ENCODE measurements at regions of chr7 and their contacts with region 1.

Region 1: GRCh38 chr7:25125137-25125946 is at the start of gene CYCS:
- H3K4me3 ChIP-seq: peak within 1 kb of the TSS; percentile 90
- H3K27ac ChIP-seq: peak within 1 kb of the TSS; percentile 72
- H3K4me1 ChIP-seq: no peaks in the 10 kb centered on the region
- CTCF ChIP-seq: 0 out of 2 replicates have a peak, but pooled peaks have one; percentile 9

Region 2: DNA sequence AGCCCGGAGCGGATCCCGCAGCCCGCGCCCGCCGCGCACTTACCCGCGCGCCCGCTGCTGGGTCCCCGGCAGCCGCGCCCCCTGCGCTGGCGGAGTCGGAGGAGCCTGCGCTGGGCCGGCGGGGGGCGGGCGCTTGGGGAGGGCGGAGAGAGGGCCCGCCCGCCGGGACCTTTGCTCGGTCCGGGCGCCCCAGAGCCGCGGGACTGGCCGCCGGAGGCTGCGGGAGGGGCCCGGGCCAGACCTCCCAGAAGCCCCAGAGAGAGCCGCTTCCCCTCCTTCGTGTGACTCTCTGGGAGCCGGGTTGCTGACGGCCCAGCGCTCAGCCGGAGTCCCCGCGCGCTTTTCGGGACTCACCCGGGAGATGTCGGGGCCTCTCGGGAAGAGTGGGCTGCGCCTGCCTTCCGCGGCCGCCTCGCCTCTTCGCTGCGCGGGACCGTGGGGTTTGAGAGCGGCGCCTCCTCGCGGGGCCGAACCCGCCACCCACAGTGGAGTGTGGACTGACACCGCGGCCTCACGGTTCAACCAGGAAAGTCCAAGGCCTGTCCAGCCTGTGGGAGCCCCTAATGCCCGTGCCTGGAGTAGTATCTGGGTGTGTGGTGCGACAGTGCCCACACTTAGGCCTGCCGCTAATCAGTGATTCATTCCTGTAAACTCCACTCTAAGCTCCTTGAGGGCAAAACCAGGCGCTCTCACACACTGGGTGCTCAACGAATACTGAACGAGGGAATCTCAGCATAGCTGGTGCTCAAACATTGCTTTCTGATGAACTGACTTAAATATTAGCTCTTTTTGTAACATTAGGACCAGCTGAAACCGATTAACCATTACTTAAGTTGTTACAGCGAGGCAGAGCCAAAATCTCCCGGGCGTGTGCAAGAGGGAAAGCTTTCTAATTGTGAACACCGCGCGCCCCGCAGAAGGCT is 367.7 kb before region 1 on chr7 and contains the start of gene GSDME:
- CTCF ChIA-PET with region 1: no interaction called
- POLR2A ChIA-PET with region 1: interaction called, 11 read pairs
- H3K4me3 ChIP-seq: peak within 1 kb of the TSS; percentile 62
- H3K27ac ChIP-seq: peak within 1 kb of the TSS; percentile 50; the same call in 1 of the 2 replicates
- H3K4me1 ChIP-seq: no peaks in the 10 kb centered on the region
- CTCF ChIP-seq: no peak

Region 3: DNA sequence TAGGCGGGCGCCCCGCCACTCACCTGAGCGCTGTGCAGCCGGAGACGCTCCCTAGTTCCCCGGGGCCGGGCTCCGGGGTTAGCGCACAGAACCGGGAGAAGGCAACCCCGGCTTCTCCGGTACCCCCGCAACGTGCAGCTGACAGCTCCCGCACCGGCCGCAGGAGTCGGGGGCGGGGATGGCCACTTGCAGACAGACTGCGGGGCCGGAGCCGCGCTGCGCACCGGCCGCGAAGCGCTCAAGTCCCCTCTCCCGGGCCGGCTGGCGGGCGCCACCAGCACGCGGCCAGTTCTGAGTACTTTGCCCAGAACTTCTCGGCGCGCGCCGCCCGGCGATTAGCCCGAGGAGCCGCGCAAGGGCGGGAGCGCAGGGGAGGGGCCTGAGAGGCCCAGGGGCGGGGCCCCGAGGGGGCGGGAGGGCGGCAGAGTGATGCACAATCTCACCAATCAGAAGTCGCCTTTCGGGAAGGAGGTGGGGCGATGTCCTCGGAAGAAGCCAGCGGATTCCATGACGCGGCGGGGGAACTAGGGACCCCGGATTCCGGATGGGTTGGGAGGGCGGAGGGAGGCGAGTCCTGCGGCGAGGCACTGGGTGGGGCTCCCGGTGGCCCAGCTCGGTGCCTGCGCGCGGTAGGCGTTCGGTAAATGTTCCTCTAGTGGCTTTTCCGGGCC is 145.3 kb before region 1 on chr7 and contains the start of gene OSBPL3:
- CTCF ChIA-PET with region 1: no interaction called
- POLR2A ChIA-PET with region 1: interaction called, 11 read pairs
- H3K4me3 ChIP-seq: peak within 1 kb of the TSS; percentile 81
- H3K27ac ChIP-seq: peak within 1 kb of the TSS; percentile 87
- H3K4me1 ChIP-seq: peaks cover 2% of the 10 kb centered on the region; the same call in 1 of the 2 replicates
- CTCF ChIP-seq: no peak

Region 4: GRCh38 chr7:25139536-25139935 is 14.2 kb after region 1 on chr7:
- CTCF ChIA-PET with region 1: interaction called, 3 read pairs
- POLR2A ChIA-PET with region 1: interaction called, 12 read pairs
- H3K4me3 ChIP-seq: no peak overlapping the region
- H3K27ac ChIP-seq: no peak overlapping the region
- H3K4me1 ChIP-seq: no peaks in the 10 kb centered on the region
- CTCF ChIP-seq: no peak

Region 5: GRCh38 chr7:25179771-25180591 is 54.6 kb after region 1 on chr7:
- CTCF ChIA-PET with region 1: interaction called, 4 read pairs
- POLR2A ChIA-PET with region 1: interaction called, 34 read pairs
- H3K4me3 ChIP-seq: peak overlapping the region; percentile 80
- H3K27ac ChIP-seq: no peak overlapping the region; the same call in 1 of the 2 replicates
- H3K4me1 ChIP-seq: 0 out of 2 replicates have a peak, but pooled peaks cover 3% of the 10 kb centered on the region
- CTCF ChIP-seq: peak; percentile 32; the same call in 1 of the 2 replicates

Region 6: DNA sequence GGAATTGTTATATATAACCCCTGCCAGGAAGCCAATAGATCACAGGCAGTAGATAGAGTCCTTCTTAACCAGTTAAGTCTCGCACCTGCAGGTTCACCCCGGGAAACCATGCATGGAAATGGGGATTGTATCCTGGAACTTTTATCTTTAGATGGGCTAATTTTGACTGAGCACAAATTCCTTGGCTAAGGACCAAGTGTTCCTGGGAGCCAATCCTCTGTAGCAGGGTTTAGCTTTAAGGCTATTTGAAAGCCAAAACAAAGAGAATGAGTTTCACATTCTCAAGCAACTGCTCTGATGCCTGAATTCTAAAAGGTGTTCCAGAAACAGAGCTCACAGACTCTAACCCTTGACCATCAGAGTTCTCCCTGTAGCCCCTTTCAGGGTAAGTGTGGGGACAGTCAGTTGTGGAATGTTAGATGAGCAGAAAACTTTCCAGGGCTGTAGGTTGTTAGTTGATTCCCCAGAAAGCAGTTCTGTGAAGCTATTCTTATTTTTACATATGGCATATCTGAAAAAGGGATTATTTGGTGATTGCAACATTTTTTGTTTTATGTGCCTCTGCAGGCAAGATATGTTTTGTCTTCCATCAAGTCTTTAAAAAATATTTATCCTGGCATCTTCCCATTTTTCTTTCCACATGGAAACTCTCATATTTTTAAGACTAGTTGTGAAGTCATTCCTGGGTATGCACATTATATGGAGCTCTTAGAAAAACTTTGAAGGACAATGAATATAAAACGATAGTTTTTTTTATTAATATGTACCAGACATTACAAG is 119.1 kb after region 1 on chr7:
- CTCF ChIA-PET with region 1: no interaction called
- POLR2A ChIA-PET with region 1: no interaction called
- H3K4me3 ChIP-seq: no peak overlapping the region
- H3K27ac ChIP-seq: no peak overlapping the region
- H3K4me1 ChIP-seq: no peaks in the 10 kb centered on the region
- CTCF ChIP-seq: no peak

Measured in HEK293 (cell line).